Tibial artery (tissue), 4 donors: ENCODE measurements at regions of chr14 and their contacts with region 1.

Region 1: GRCh38 chr14:20682435-20683124 is 1.8 kb upstream of the RNASE4 start:
- DNase-seq: peak; percentile 94 to 95
- H3K4me3 ChIP-seq: peak overlapping the region; percentile 76 to 81
- H3K27ac ChIP-seq: peak overlapping the region; percentile 99
- H3K4me1 ChIP-seq: peaks cover 0 to 37% (median 21%) of the 10 kb centered on the region in 4 donors
- H3K27me3 ChIP-seq: no peaks in the 10 kb centered on the region
- CTCF ChIP-seq: peak in 1 of 2 experiments; percentile 15

Region 2: DNA sequence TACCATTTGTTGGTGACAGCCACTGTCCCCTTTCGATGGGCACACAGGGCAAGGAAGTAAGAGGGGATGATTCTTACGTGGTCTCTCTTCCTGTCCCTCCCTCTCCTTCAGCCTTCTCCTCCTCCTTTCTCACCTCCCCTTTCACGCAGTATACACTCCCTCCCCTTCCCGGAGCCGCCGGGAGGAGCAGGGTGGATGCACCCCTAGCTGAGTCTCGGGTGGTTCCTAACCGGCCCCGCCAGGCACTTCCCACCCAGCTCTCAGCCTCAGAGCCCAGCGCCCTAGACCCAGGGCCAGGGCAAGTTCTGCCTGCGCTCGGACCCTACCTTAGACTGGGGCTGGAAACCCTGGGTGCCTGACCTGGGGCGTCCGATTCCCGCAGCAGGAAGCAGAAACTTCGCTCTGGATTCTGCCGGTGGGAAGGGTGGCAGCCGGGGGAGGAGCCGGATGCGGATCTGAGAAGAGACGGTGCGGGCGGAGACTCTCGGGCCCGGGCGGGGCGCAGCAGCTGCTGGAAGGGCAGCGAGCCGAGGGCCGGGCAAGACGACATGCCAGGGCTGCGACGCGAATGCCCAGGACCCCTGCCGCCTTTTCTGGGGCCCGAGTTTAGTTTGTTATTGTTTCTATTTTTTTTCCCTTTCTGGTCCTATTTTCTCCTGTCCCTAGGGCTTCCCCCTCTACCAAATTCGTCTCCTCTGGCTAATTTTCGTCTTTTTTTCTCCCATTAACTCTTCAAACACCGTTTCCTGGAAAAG is 269.4 kb before region 1 on chr14 and contains the start of gene TEP1:
- intact Hi-C with region 1: loop called (anchors 5 kb)
- DNase-seq: peak; percentile 92 to 94
- H3K4me3 ChIP-seq: peak within 1 kb of the TSS; percentile 75 to 91
- H3K27ac ChIP-seq: peak within 1 kb of the TSS; percentile 94
- H3K4me1 ChIP-seq: peaks cover 0 to 19% (median 12%) of the 10 kb centered on the region in 4 donors
- H3K27me3 ChIP-seq: no peaks in the 10 kb centered on the region
- CTCF ChIP-seq: peak in 1 of 2 experiments; percentile 8

Region 3: GRCh38 chr14:20613094-20614037 is 69.2 kb before region 1 on chr14:
- intact Hi-C with region 1: loop called (anchors 2 kb)
- DNase-seq: peak; percentile 82 to 88
- H3K4me3 ChIP-seq: peak overlapping the region; percentile 55 to 59
- H3K27ac ChIP-seq: peak overlapping the region; percentile 70 to 75
- H3K4me1 ChIP-seq: peaks cover 0 to 22% (median 12%) of the 10 kb centered on the region in 4 donors
- H3K27me3 ChIP-seq: no peaks in the 10 kb centered on the region
- CTCF ChIP-seq: peak; percentile 79 to 99

Region 4: GRCh38 chr14:20970983-20971704 is 288.6 kb after region 1 on chr14:
- intact Hi-C with region 1: loop called (anchors 5 kb)
- DNase-seq: peak; percentile 75 to 92
- H3K4me3 ChIP-seq: peak overlapping the region; percentile 60 to 63
- H3K27ac ChIP-seq: peak overlapping the region; percentile 63 to 80
- H3K4me1 ChIP-seq: peaks cover 0 to 27% (median 14%) of the 10 kb centered on the region in 4 donors
- H3K27me3 ChIP-seq: no peaks in the 10 kb centered on the region
- CTCF ChIP-seq: peak; percentile 87

Region 5: DNA sequence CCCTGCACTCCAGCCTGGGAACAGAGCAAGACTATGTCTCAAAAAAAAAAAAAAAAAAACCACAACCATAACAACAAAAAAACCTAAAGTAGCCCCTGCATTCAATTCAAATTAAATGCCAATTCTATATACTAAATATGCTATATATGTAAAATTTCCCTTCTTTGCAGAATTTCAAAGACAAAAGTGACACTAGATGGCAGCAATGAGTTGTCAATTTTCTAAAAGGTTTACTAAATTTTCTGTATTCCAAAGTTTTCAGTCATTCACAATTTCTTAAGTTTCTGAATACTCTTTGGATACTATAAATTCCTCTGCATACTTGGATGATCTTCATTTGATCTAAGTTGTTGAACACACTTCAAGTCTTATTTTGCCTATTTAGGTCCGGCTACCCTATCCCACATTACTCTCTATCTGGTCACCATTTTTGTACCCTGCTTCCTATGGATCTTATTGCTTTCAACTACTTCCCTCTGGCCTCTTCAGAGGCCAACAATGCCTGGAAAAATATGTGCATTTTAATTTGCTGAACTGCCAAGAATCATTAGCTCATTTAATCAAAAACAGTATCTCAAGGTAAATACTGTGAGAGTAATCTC is 558.7 kb after region 1 on chr14:
- intact Hi-C with region 1: no loop called
- DNase-seq: no peak
- H3K4me3 ChIP-seq: no peak overlapping the region
- H3K27ac ChIP-seq: no peak overlapping the region
- H3K4me1 ChIP-seq: peaks cover 0 to 65% (median 34%) of the 10 kb centered on the region in 4 donors
- H3K27me3 ChIP-seq: no peaks in the 10 kb centered on the region
- CTCF ChIP-seq: peak in 1 of 2 experiments; percentile 25

Region 6: DNA sequence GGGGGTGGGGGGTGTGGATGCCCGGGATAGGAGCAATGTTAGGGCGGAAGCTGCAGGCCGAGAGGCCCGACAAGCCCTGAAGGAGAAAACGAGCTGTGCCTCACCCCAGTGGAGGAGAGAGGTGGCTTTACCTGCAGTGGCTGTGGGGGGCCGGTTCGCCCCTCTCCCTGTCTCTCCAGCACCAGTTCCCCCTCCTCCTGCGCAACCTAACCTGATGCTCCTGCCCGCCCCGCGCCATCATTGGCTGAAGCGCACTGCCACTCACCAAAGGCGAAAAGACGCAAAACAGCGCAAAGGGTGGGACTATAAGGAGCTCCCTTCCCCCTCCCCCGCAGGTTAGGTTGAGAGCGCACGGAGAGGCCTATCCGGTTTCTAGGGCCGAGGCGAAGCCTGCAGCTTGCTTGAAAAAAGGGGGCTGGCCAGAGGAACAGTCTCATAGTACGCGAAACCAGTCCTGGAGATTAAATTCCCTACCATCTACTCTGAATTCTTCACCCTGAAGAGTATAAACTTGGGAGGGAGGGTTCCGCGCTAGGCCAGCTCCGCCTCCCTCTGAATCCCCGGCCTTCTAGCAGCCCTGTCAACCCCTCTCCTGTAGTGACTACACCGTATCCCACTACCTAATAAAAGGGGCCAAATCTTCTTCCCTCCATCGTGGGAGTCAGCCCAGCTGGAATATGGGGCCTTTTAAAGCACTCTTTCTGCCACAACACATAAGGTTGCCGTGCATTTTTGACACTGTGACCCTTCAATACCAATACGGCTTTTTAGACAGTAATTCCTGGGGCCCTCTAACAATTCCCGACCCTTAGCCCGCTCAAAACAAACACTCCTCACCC is 754.7 kb after region 1 on chr14:
- intact Hi-C with region 1: loop called (anchors 5 kb)
- DNase-seq: peak; percentile 99
- H3K4me3 ChIP-seq: peak overlapping the region; percentile 81 to 97
- H3K27ac ChIP-seq: peak overlapping the region; percentile 87 to 94
- H3K4me1 ChIP-seq: peaks cover 0 to 30% (median 18%) of the 10 kb centered on the region in 4 donors
- H3K27me3 ChIP-seq: no peaks in the 10 kb centered on the region
- CTCF ChIP-seq: peak in 1 of 2 experiments; percentile 11